MCF 10A (cell line): ENCODE measurements at regions of chr11 and their contacts with region 1.

Region 1: GRCh38 chr11:102109896-102110760 is at the start of gene YAP1:
- DNase-seq: peak; percentile 92
- H3K4me3 Mint-ChIP-seq: peak within 1 kb of the TSS; percentile 92
- H3K27ac Mint-ChIP-seq: peak within 1 kb of the TSS; percentile 98
- H3K4me1 Mint-ChIP-seq: peaks cover 15% of the 10 kb centered on the region
- H3K27me3 Mint-ChIP-seq: no peaks in the 10 kb centered on the region
- CTCF ChIP-seq: no peak
- total RNA-seq, gene YAP1: 139 and 158 TPM in 2 replicates

Region 2: DNA sequence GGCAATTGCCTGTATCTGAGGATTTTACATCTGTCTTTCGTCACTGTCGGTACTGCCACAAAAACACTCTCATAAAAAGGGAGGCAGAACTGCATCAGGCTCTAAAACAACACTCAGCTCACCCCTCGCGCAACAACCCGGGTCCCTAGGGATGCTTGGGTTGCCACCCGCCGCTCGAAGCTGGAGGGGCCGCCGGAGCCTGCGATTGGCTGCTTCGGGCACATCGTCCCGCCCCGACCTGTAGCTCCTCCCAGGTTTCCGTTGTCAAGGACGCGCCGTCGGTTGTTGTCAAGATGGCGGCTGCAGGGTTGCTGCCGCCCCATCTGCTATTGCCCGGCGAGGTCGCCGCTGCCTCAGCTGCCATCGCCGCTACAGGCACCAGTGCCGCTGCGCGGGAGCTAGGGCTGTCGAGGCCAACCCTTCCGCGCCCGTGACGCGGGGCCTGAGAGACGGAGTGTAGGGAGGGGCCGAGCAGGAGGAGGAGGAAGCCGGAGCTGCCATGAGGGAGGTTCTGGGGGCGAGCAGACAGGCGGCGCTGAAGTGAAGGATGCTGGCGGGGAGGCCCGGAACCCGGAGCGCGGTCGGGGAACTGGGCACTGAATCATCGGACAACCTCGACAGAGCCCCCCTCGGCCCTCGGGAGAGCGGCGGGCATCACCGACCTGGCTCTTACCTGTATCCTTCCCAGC is 195.2 kb before region 1 on chr11 and contains the start of gene CEP126:
- CTCF ChIA-PET with region 1: no interaction called
- POLR2A ChIA-PET with region 1: no interaction called
- intact Hi-C with region 1: loop called (anchors 1 kb)
- DNase-seq: peak; percentile 92
- H3K4me3 Mint-ChIP-seq: peak within 1 kb of the TSS; percentile 96
- H3K27ac Mint-ChIP-seq: peak within 1 kb of the TSS; percentile 98
- H3K4me1 Mint-ChIP-seq: peaks cover 33% of the 10 kb centered on the region
- H3K27me3 Mint-ChIP-seq: no peaks in the 10 kb centered on the region
- CTCF ChIP-seq: peak; percentile 27
- total RNA-seq, gene CEP126: 3.1 and 4.3 TPM in 2 replicates

Region 3: GRCh38 chr11:102047305-102047924 is 62.7 kb before region 1 on chr11 and contains the start of gene CFAP300:
- CTCF ChIA-PET with region 1: no interaction called
- POLR2A ChIA-PET with region 1: interaction called, 8 read pairs
- intact Hi-C with region 1: loop called (anchors 5 kb)
- DNase-seq: peak; percentile 75
- H3K4me3 Mint-ChIP-seq: peak within 1 kb of the TSS; percentile 85
- H3K27ac Mint-ChIP-seq: peak within 1 kb of the TSS; percentile 95
- H3K4me1 Mint-ChIP-seq: peaks cover 5% of the 10 kb centered on the region
- H3K27me3 Mint-ChIP-seq: no peaks in the 10 kb centered on the region
- CTCF ChIP-seq: no peak
- total RNA-seq, gene CFAP300: 8.0 and 12.9 TPM in 2 replicates

Region 4: GRCh38 chr11:102157219-102157618 is 47.1 kb after region 1 on chr11:
- CTCF ChIA-PET with region 1: interaction called, 5 read pairs
- POLR2A ChIA-PET with region 1: interaction called, 13 read pairs
- intact Hi-C with region 1: no loop called
- DNase-seq: peak; percentile 87
- H3K4me3 Mint-ChIP-seq: no peak overlapping the region
- H3K27ac Mint-ChIP-seq: peak overlapping the region; percentile 39
- H3K4me1 Mint-ChIP-seq: peaks cover 48% of the 10 kb centered on the region
- H3K27me3 Mint-ChIP-seq: no peaks in the 10 kb centered on the region
- CTCF ChIP-seq: no peak

Region 5: DNA sequence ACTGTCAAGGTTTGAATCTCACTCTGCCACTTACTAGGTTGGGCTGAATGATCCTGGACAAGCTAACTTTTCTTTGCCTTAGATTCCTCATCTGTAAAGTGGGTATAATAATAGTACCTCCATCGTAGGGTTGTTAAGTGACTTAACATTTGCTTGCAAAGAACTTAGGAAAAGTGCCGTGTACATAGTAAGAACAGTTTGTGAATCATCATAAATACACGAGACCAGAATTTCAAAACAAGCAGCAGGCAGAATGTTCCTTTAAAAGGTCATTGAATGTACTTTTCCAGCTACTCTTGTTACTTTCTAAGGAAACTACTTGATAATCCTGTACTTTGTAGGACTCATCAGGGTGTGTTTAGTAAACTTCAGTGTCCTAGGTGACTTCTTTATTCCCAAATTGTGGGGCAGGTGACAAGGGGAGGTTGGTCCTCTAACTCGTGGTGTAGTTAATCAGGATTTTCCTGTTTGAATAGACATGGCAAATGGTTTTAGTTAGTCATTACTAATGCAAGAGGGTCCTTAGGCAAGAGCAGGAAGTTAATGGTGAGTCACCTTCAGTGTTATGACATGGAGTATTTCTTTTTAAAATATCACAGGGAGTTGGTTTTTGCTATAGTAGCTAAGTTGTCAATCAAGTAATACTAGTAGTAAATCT is 68.0 kb after region 1 on chr11:
- CTCF ChIA-PET with region 1: interaction called, 3 read pairs
- POLR2A ChIA-PET with region 1: interaction called, 14 read pairs
- intact Hi-C with region 1: loop called (anchors 1 kb)
- DNase-seq: peak; percentile 92
- H3K4me3 Mint-ChIP-seq: peak overlapping the region; percentile 49
- H3K27ac Mint-ChIP-seq: peak overlapping the region; percentile 17
- H3K4me1 Mint-ChIP-seq: peaks cover 38% of the 10 kb centered on the region
- H3K27me3 Mint-ChIP-seq: no peaks in the 10 kb centered on the region
- CTCF ChIP-seq: no peak